Aorta (tissue), 5 donors: ENCODE measurements at regions of chr3 and their contacts with region 1.

Region 1: DNA sequence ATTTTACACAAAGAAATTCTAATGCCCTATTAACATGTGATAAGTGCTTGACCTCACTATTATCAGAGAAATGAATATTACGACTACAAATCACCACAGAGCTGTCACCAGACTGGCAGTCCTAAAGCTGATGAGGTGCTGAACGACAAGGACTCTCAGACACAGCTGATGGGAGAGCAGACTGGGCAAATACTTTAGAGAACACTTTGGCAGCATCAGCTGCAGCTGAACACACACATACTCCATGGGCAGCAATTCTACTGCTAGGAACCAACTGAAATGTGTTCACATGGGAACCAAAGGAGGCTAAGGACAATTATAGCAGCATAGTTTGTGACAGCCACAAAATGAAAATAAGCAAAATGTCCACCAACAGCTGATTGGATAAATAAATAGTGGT is 45.5 kb downstream of the SUSD5 start:
- DNase-seq: no peak
- ATAC-seq: peak; percentile 42
- H3K4me3 ChIP-seq: no peak overlapping the region
- H3K27ac ChIP-seq: peak overlapping the region in 1 of 2 donors; percentile 73
- H3K4me1 ChIP-seq: peaks cover 0 to 7% of the 10 kb centered on the region in 2 donors
- H3K27me3 ChIP-seq: no peaks in the 10 kb centered on the region

Region 2: GRCh38 chr3:33119891-33120290 is 53.2 kb before region 1 on chr3:
- intact Hi-C with region 1: no loop called
- DNase-seq: no peak
- ATAC-seq: no peak
- H3K4me3 ChIP-seq: no peak overlapping the region
- H3K27ac ChIP-seq: peak overlapping the region in 1 of 2 donors; percentile 56
- H3K4me1 ChIP-seq: peaks cover 0 to 3% of the 10 kb centered on the region in 2 donors
- H3K27me3 ChIP-seq: no peaks in the 10 kb centered on the region

Region 3: GRCh38 chr3:33144433-33144832 is 28.7 kb before region 1 on chr3:
- intact Hi-C with region 1: no loop called
- DNase-seq: no peak
- ATAC-seq: no peak
- H3K4me3 ChIP-seq: no peak overlapping the region
- H3K27ac ChIP-seq: no peak overlapping the region
- H3K4me1 ChIP-seq: peaks cover 0 to 7% of the 10 kb centered on the region in 2 donors
- H3K27me3 ChIP-seq: no peaks in the 10 kb centered on the region

Region 4: GRCh38 chr3:33211444-33211843 is 38.3 kb after region 1 on chr3:
- intact Hi-C with region 1: loop called in 1 of 2 experiments (anchors 2 kb)
- DNase-seq: peak; percentile 79 to 80
- ATAC-seq: no peak
- H3K4me3 ChIP-seq: no peak overlapping the region
- H3K27ac ChIP-seq: peak overlapping the region in 1 of 2 donors; percentile 45
- H3K4me1 ChIP-seq: peaks cover 2 to 4% of the 10 kb centered on the region in 2 donors
- H3K27me3 ChIP-seq: no peaks in the 10 kb centered on the region